OCI-LY7 (cell line): ENCODE measurements at regions of chrX and their contacts with region 1.

Region 1: GRCh38 chrX:32530802-32531403 is 680.4 kb downstream of the DMD start:
- DNase-seq: peak; percentile 71
- H3K4me3 ChIP-seq: peak overlapping the region; percentile 44
- H3K27ac ChIP-seq: no peak overlapping the region
- H3K4me1 ChIP-seq: no peaks in the 10 kb centered on the region
- CTCF ChIP-seq: peak; percentile 86

Region 2: GRCh38 chrX:33336783-33337182 is 805.9 kb after region 1 on chrX:
- CTCF ChIA-PET with region 1: no interaction called
- POLR2A ChIA-PET with region 1: no interaction called
- intact Hi-C with region 1: loop called (anchors 5 kb)
- DNase-seq: peak; percentile 68
- H3K4me3 ChIP-seq: no peak overlapping the region
- H3K27ac ChIP-seq: no peak overlapping the region
- H3K4me1 ChIP-seq: peaks cover 16% of the 10 kb centered on the region
- CTCF ChIP-seq: peak; percentile 79

Region 3: GRCh38 chrX:34300871-34301270 is 1770.0 kb after region 1 on chrX:
- CTCF ChIA-PET with region 1: no interaction called
- POLR2A ChIA-PET with region 1: no interaction called
- intact Hi-C with region 1: loop called (anchors 5 kb)
- DNase-seq: peak; percentile 47
- H3K4me3 ChIP-seq: no peak overlapping the region
- H3K27ac ChIP-seq: no peak overlapping the region
- H3K4me1 ChIP-seq: no peaks in the 10 kb centered on the region
- CTCF ChIP-seq: peak; percentile 75